ENCODE measurements at regions of chr2 and their contacts with region 1.

Region 1: GRCh38 chr2:30362468-30363081 is 84.5 kb upstream of the LCLAT1 start:
- DNase-seq: no peak
- H3K4me3 ChIP-seq: no peak overlapping the region
- H3K27ac ChIP-seq: peak overlapping the region; percentile 81 to 88 (median 88)
- H3K4me1 ChIP-seq: peaks cover 57 to 70% (median 65%) of the 10 kb centered on the region in 4 donors
- H3K27me3 ChIP-seq: no peaks in the 10 kb centered on the region
- CTCF ChIP-seq: no peak
- EP300 ChIP-seq: no peak
- POLR2A ChIP-seq: no peak

Region 2: DNA sequence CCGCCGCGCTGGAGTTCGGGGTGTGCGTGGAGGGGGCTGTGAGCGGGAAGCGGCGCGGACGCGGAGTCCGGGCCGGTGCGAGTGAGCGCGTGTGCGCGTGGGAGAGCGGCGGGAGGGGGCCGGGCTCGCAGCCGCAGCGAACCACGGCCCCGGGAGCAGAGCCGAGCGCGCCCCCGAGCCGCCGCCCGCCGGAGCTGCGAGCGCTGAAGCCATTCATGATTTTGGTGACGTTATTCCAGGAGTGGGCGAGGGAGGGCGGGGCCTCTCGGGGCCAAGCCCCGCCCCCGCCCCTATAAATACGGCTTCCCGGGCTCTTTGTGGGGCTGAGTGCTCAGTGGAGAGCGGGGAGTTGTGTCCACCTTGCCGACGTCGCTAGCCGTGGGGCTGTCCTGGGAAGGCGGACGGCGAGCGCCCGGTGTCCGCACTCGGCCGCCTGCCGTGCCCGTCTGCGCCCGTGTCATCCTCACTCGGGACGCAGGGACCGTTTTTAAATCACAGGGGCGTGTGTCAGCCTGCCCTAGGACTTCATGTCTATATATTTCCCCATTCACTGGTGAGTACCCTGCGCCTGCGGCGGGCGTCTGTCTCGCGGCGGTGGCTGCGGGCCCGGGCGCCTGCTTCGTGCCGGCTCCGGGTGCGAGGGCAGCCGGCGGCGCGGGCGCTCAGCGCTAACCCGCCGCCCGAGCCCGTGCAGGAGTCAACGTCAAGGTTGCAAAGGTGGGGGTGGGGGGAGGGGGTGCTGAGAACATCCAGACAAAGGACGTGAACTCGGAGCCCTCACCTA is 131.2 kb before region 1 on chr2 and contains the start of gene LBH:
- intact Hi-C with region 1: loop called (anchors 5 kb)
- DNase-seq: peak; percentile 98
- H3K4me3 ChIP-seq: peak within 1 kb of the TSS; percentile 72 to 96 (median 82)
- H3K27ac ChIP-seq: peak within 1 kb of the TSS; percentile 90 to 95 (median 92)
- H3K4me1 ChIP-seq: peaks cover 33 to 57% (median 50%) of the 10 kb centered on the region in 4 donors
- H3K27me3 ChIP-seq: no peaks in the 10 kb centered on the region
- CTCF ChIP-seq: no peak
- EP300 ChIP-seq: no peak
- POLR2A ChIP-seq: peak; percentile 98
- total RNA-seq, gene LBH: 120 to 1,007 (median 283) TPM

Region 3: GRCh38 chr2:30300456-30301221 is 61.9 kb before region 1 on chr2:
- intact Hi-C with region 1: loop called (anchors 5 kb)
- DNase-seq: no peak
- H3K4me3 ChIP-seq: peak overlapping the region in 1 of 4 donors; percentile 40
- H3K27ac ChIP-seq: peak overlapping the region; percentile 82 to 88 (median 85)
- H3K4me1 ChIP-seq: peaks cover 28 to 36% (median 32%) of the 10 kb centered on the region in 4 donors
- H3K27me3 ChIP-seq: no peaks in the 10 kb centered on the region
- CTCF ChIP-seq: no peak
- EP300 ChIP-seq: peak; percentile 71
- POLR2A ChIP-seq: no peak

Region 4: DNA sequence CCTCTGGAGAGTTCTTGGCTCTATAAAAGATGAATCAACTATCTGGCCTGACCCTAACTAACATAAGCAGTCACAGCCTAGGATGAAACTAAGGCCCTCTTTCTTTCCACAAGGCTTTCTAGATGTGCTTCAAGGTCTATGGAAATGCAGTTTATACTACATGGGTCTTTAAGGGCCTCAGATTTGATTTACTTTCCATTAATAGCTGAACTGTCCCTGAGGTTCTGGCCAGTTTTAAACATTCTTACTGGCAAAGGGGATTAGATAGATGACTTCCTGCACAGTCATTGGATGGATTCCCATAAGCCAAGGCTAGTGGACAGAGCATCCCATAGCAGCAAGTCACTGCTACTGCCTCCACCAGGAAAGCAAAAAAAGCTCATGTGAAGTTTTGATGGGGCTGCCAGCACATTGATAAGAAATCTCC is 46.4 kb after region 1 on chr2:
- intact Hi-C with region 1: loop called (anchors 5 kb)
- DNase-seq: no peak
- H3K4me3 ChIP-seq: no peak overlapping the region
- H3K27ac ChIP-seq: peak overlapping the region; percentile 76 to 87 (median 80)
- H3K4me1 ChIP-seq: peaks cover 71 to 98% (median 85%) of the 10 kb centered on the region in 4 donors
- H3K27me3 ChIP-seq: no peaks in the 10 kb centered on the region
- CTCF ChIP-seq: peak in 1 of 3 experiments; percentile 24
- EP300 ChIP-seq: peak; percentile 82
- POLR2A ChIP-seq: no peak

Region 5: GRCh38 chr2:30691948-30692828 is 329.6 kb after region 1 on chr2:
- intact Hi-C with region 1: loop called (anchors 5 kb)
- DNase-seq: peak; percentile 88
- H3K4me3 ChIP-seq: no peak overlapping the region
- H3K27ac ChIP-seq: peak overlapping the region; percentile 18 to 82 (median 55)
- H3K4me1 ChIP-seq: peaks cover 33 to 84% (median 80%) of the 10 kb centered on the region in 4 donors
- H3K27me3 ChIP-seq: no peaks in the 10 kb centered on the region
- CTCF ChIP-seq: peak in 1 of 3 experiments; percentile 25
- EP300 ChIP-seq: no peak
- POLR2A ChIP-seq: no peak